ENCODE measurements at regions of chr15 and their contacts with region 1.

Region 1: DNA sequence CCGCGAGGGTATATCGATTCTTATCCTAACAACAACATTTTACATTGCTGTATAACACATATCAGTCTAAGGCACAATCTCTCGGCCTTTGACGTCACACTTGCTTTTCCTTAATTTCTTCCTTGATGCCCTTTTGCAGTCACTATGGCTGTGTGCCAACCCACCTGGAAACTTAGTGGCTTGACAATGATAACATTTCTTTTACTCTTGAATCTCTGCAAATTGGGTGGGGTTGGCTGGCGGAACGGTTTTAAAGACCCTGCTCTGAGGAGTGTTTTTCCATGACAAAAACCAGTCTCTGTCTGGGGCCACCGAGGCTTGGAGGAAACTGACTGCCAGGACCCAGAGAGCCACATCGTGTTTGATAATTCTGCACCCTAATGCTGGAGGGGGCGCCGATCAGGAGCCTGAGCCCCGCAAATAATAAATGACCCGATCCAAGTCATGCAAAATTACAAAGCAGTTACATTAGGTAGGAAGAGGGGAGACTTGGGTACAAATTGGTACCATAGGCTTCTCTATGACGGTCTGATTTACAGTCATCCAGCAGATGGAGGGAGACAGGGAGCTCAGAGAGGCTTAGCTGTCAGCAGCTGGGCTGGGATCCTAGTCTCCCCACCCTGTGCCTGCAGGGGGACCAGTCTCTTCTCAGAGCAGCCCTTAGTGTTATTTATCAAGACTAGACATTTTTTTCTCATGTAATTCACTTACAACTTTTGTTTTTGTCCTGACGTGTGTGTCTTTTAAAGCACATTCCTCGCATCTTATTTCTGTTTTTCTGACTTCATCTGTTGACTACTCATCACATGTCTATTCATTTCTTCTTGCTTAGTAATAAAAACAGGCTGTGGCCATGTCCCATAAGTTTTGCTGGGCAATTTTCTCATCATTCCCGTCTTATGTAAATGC is 115.8 kb downstream of the KLF13 start:
- DNase-seq: peak; percentile 39
- H3K4me3 Mint-ChIP-seq: no peak overlapping the region
- H3K27ac Mint-ChIP-seq: peak overlapping the region; percentile 50
- H3K4me1 Mint-ChIP-seq: peaks cover 21% of the 10 kb centered on the region
- H3K27me3 Mint-ChIP-seq: no peaks in the 10 kb centered on the region
- CTCF ChIP-seq: peak; percentile 10

Region 2: GRCh38 chr15:31200735-31201151 is 241.7 kb before region 1 on chr15:
- CTCF ChIA-PET with region 1: interaction called, 3 read pairs
- POLR2A ChIA-PET with region 1: no interaction called
- intact Hi-C with region 1: loop called (anchors 2 kb)
- DNase-seq: peak; percentile 71
- H3K4me3 Mint-ChIP-seq: no peak overlapping the region
- H3K27ac Mint-ChIP-seq: no peak overlapping the region
- H3K4me1 Mint-ChIP-seq: peaks cover 6% of the 10 kb centered on the region
- H3K27me3 Mint-ChIP-seq: peaks cover 11% of the 10 kb centered on the region
- CTCF ChIP-seq: peak; percentile 41

Region 3: DNA sequence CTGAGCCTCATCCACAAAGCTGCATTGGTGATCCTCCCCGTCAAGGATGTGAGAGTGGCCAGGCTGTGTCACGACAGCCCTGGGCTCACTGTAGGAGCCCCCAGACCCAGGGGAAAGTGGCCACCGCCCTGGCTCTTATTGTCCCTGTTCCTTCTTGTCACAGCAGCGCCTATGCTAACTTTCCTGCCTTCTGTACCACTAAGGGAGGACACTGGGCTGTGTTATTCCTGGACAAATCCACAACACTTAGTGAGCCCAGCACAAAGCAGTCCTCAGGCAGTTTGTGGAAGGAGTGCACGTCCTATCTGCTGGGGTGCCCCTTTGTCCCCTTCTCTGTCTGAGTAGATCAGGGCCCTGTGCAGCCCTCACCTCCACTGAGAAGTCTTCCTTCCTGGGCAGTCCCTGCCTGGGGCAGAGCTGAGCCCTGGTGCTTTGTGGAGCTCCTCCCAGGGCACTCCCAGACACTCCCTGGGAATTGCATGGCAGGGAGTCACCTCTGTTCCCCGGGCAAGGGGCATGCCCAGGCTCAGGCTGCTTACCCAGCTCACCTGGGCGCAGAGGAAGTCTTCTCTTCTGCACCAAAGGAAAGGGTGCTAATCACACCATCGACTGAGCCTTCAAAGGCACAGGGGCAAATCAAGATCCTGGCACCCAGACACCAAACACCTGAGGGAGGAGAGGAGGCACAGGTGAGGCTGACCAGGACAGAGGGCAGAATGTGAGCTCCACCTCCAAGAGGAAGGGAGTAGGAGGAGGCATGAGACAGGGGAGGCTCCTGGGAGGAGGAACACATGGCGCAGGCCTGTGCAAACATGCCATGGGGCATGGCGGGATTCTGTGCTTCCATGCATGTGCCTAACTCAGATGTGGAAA is 22.9 kb after region 1 on chr15:
- CTCF ChIA-PET with region 1: interaction called, 4 read pairs
- POLR2A ChIA-PET with region 1: interaction called, 21 read pairs
- intact Hi-C with region 1: no loop called
- DNase-seq: peak; percentile 80
- H3K4me3 Mint-ChIP-seq: peak overlapping the region; percentile 66
- H3K27ac Mint-ChIP-seq: peak overlapping the region; percentile 90
- H3K4me1 Mint-ChIP-seq: peaks cover 10% of the 10 kb centered on the region
- H3K27me3 Mint-ChIP-seq: no peaks in the 10 kb centered on the region
- CTCF ChIP-seq: no peak

Measured in MCF 10A (cell line).